ENCODE measurements at regions of chr4 and their contacts with region 1.

Region 1: DNA sequence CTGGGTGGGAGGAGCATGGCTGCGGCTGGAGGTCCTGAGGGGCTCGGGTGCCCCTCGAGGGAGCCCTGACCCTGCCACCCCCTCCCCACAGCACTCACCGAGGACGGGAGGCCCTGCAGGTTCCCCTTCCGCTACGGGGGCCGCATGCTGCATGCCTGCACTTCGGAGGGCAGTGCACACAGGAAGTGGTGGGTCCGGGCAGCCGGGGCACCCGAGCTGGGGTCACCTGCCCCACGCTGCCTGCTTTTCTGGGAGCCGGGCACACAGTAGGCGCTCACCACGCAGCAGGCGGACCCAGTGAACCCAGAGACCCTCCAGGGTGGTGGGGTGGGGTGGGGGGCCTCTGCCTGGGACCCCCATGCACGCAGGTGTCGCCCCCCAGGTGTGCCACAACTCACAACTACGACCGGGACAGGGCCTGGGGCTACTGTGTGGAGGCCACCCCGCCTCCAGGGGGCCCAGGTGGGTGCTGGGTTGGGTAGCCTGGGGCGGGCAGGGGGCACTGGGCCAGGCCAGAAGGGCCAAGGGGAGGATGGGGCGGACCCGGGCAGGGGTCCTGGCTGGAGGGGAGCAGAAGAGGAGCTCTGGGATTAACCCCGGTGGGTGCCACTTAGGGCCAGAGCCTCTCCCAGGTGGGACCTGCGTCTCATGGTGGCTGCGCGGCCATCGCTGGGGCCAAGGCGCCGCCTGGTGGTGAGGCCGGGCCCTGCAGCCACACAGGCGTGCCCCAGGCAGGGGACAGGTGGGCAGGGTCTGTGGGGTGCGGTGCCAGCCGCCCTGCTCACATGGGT is 1.4 kb downstream of the HGFAC start:
- DNase-seq: peak in 8 of 10 donors; percentile 35 to 93 (median 58)

Region 2: GRCh38 chr4:3106339-3107186 is 336.6 kb before region 1 on chr4:
- intact Hi-C with region 1: loop called (anchors 10 kb)
- DNase-seq: peak; percentile 78 to 98 (median 90)

Region 3: GRCh38 chr4:3193531-3194203 is 249.5 kb before region 1 on chr4:
- intact Hi-C with region 1: loop called (anchors 5 kb)
- DNase-seq: no peak

Region 4: DNA sequence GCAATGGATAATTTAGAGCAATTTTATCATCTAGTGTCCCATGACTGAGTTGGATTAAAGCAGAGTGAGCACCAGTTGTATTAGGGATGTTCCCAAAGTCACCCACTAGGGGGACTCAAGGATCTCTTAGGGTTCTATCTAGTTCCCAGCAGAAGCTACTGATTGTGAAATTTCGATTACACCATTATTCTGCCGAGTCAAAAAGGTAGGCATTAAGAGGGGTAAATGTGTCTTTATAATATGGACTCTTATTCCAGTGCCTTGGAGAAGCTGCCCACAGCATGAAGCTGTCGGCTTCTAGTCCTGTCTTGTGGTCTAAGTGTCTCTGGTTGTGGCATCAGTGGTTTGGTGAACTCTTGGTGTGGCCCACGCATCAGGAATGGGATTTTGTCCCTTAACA is 97.0 kb before region 1 on chr4:
- intact Hi-C with region 1: loop called (anchors 1 kb)
- DNase-seq: no peak

Measured in posterior cingulate gyrus (tissue), 11 donors.